ENCODE measurements at regions of chr5 and their contacts with region 1.

Region 1: DNA sequence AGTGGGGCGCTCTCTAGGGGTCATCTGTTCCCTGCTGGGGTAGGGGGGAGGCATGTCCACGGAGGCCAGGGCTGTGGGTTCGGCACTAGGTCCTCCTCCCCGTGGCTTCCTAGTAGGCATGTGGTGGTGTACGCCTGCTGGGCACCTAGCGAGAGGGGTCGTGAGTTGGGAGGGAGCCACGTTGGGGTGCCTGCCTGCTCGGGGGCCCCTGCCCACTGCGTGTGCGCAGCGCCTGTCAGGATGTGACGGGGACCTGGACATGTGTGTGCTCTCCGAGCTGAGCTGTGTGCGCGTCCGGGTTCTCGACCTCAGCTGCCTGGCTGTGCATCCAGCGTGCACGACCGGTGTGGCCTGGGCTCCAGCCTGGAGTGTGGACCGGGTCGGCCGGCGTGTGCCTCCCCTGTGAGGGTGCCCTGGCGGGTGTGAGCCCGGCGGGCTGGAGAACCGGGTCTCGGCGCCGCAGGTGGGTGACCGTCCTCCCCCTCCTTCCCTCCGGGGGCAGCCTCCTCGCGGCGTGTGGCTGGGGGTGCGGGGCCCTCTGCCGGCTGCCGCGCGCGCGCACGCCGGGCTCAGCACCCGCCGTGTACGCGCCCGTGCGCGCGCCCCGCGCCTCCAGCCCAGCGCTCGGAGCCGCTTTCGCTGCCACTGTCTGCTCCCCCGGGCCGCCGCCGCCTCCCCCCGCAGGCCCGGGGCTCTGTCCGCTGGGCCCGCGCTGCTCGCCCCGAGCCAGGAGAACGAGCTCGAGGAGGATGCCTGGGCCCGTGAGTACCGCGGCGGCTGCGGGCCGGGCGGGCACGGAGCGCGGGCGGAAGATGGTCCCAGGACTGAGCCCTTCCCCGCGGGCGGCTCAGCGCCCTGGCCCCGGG is at the start of gene PRR7:
- DNase-seq: peak in 4 of 5 donors; percentile 63 to 77 (median 71)
- ATAC-seq: peak in 3 of 4 donors; percentile 57 to 72 (median 69)
- H3K4me3 ChIP-seq: peak within 1 kb of the TSS; percentile 53 to 78 (median 62)
- H3K27ac ChIP-seq: peak within 1 kb of the TSS in 3 of 12 donors; percentile 4 to 60 (median 30)
- H3K4me1 ChIP-seq: peaks cover 2 to 38% (median 21%) of the 10 kb centered on the region in 12 donors
- H3K27me3 ChIP-seq: peaks cover 0 to 19% (median 3%) of the 10 kb centered on the region in 9 donors
- CTCF ChIP-seq: peak in 4 of 12 donors; percentile 8 to 21 (median 16)
- POLR2A ChIP-seq: no peak
- total RNA-seq, gene PRR7: 0.82 to 5.0 (median 1.8) TPM

Region 2: DNA sequence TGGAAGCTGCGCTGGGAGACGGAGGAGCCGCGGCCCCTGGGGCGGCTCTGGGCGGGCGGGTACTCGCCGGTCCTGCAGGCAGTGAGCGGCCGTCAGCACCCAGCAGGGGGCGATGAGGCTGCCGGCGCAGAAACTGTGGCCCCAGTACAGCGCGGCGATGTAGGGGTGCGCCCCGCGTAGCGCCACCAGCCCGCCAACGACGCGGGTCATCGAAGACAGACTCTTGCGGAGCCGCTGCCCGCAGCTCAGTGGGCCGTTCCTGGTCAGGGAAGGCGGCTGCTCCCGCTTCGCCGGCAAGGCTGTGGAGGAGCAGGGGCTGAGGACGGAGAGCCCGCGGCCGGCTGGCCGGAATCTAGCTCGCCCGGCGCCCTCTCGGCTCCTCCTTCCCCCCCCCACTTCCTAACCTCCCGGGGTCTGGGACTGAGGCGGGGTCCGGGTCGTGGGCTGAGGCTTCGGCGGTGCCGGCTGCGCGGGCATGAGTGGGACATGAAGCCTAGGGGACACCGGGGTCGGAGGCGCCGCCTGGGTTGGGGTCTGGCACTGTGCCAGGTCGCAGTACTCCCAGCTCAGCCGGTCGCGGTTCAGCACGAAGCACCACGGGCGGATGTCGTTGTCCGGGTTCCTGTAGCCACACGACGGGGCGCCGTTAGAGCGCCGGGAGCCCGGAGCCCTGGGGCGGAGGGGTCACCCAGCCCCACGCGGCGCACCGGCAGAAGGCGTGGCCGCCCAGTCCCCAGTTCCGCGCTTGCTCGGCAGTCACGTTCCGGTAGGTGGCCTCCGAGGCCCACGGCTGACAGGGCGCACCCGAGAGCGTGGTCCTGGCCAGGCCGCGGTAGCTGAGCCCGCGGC is 42.4 kb before region 1 on chr5:
- intact Hi-C with region 1: loop called in 3 of 10 experiments (anchors 2 to 5 kb)
- DNase-seq: peak; percentile 85 to 93 (median 87)
- ATAC-seq: peak; percentile 85 to 97 (median 94)
- H3K4me3 ChIP-seq: peak overlapping the region; percentile 32 to 64 (median 56)
- H3K27ac ChIP-seq: peak overlapping the region in 2 of 12 donors; percentile 25 to 35
- H3K4me1 ChIP-seq: peaks cover 8 to 51% (median 32%) of the 10 kb centered on the region in 12 donors
- H3K27me3 ChIP-seq: peaks cover 39 to 63% (median 50%) of the 10 kb centered on the region in 9 donors
- CTCF ChIP-seq: peak; percentile 63 to 85 (median 68)
- POLR2A ChIP-seq: no peak